PC-9 (cell line): ENCODE measurements at regions of chr18 and their contacts with region 1.

Region 1: GRCh38 chr18:51100385-51101000 is 70.5 kb downstream of the SMAD4 start:
- DNase-seq: no peak
- H3K4me3 ChIP-seq: no peak overlapping the region
- H3K27ac ChIP-seq: no peak overlapping the region
- H3K4me1 ChIP-seq: no peaks in the 10 kb centered on the region
- H3K27me3 ChIP-seq: no peaks in the 10 kb centered on the region
- CTCF ChIP-seq: no peak

Region 2: GRCh38 chr18:51082571-51083267 is 17.8 kb before region 1 on chr18:
- CTCF ChIA-PET with region 1: no interaction called
- POLR2A ChIA-PET with region 1: interaction called, 16 read pairs
- intact Hi-C with region 1: no loop called
- DNase-seq: peak; percentile 5 to 97
- H3K4me3 ChIP-seq: no peak overlapping the region
- H3K27ac ChIP-seq: peak overlapping the region; percentile 92
- H3K4me1 ChIP-seq: peaks cover 28% of the 10 kb centered on the region
- H3K27me3 ChIP-seq: no peaks in the 10 kb centered on the region
- CTCF ChIP-seq: no peak

Region 3: GRCh38 chr18:51370996-51371395 is 270.5 kb after region 1 on chr18:
- CTCF ChIA-PET with region 1: no interaction called
- POLR2A ChIA-PET with region 1: no interaction called
- intact Hi-C with region 1: no loop called
- DNase-seq: no peak
- H3K4me3 ChIP-seq: no peak overlapping the region
- H3K27ac ChIP-seq: no peak overlapping the region
- H3K4me1 ChIP-seq: no peaks in the 10 kb centered on the region
- H3K27me3 ChIP-seq: no peaks in the 10 kb centered on the region
- CTCF ChIP-seq: no peak